PC-3 (cell line): ENCODE measurements at regions of chr2 and their contacts with region 1.

Region 1: GRCh38 chr2:47935071-47935470 is 28.8 kb upstream of the FBXO11 start:
- DNase-seq: no peak
- ATAC-seq: no peak
- H3K4me3 ChIP-seq: no peak overlapping the region
- H3K27ac ChIP-seq: no peak overlapping the region
- H3K4me1 ChIP-seq: no peaks in the 10 kb centered on the region
- H3K27me3 ChIP-seq: no peaks in the 10 kb centered on the region; the same call in 1 of the 2 replicates
- CTCF ChIP-seq: no peak

Region 2: GRCh38 chr2:48009256-48009655 is 74.2 kb after region 1 on chr2:
- CTCF ChIA-PET with region 1: no interaction called
- POLR2A ChIA-PET with region 1: no interaction called
- intact Hi-C with region 1: loop called (anchors 10 kb)
- DNase-seq: no peak
- ATAC-seq: no peak
- H3K4me3 ChIP-seq: no peak overlapping the region
- H3K27ac ChIP-seq: no peak overlapping the region
- H3K4me1 ChIP-seq: no peaks in the 10 kb centered on the region
- H3K27me3 ChIP-seq: peaks cover 18% of the 10 kb centered on the region
- CTCF ChIP-seq: no peak

Region 3: GRCh38 chr2:48227617-48228344 is 292.7 kb after region 1 on chr2:
- CTCF ChIA-PET with region 1: no interaction called
- POLR2A ChIA-PET with region 1: no interaction called
- intact Hi-C with region 1: no loop called
- DNase-seq: no peak
- ATAC-seq: no peak
- H3K4me3 ChIP-seq: no peak overlapping the region
- H3K27ac ChIP-seq: no peak overlapping the region
- H3K4me1 ChIP-seq: no peaks in the 10 kb centered on the region
- H3K27me3 ChIP-seq: no peaks in the 10 kb centered on the region
- CTCF ChIP-seq: no peak